Esophagus squamous epithelium (tissue), 5 donors: ENCODE measurements at regions of chr20 and their contacts with region 1.

Region 1: GRCh38 chr20:3710703-3711483 is 1.5 kb downstream of the SIGLEC1 start:
- DNase-seq: no peak
- H3K4me3 ChIP-seq: peak overlapping the region in 1 of 4 donors; percentile 0
- H3K27ac ChIP-seq: peak overlapping the region in 2 of 4 donors; percentile 29 to 66
- H3K4me1 ChIP-seq: peaks cover 0 to 15% (median 5%) of the 10 kb centered on the region in 3 donors
- H3K27me3 ChIP-seq: no peaks in the 10 kb centered on the region
- CTCF ChIP-seq: peak; percentile 77 to 98 (median 90)
- POLR2A ChIP-seq: no peak

Region 2: GRCh38 chr20:3407771-3408637 is 302.9 kb before region 1 on chr20:
- intact Hi-C with region 1: no loop called
- DNase-seq: no peak
- H3K4me3 ChIP-seq: peak overlapping the region; percentile 72 to 98 (median 96)
- H3K27ac ChIP-seq: peak overlapping the region; percentile 91 to 99 (median 98)
- H3K4me1 ChIP-seq: peaks cover 10 to 43% (median 21%) of the 10 kb centered on the region in 3 donors
- H3K27me3 ChIP-seq: no peaks in the 10 kb centered on the region
- CTCF ChIP-seq: no peak
- POLR2A ChIP-seq: peak in 1 of 4 donors; percentile 64

Region 3: GRCh38 chr20:3679749-3680700 is 30.9 kb before region 1 on chr20:
- intact Hi-C with region 1: loop called (anchors 5 kb)
- DNase-seq: no peak
- H3K4me3 ChIP-seq: peak overlapping the region; percentile 27 to 77 (median 52)
- H3K27ac ChIP-seq: peak overlapping the region; percentile 80 to 95 (median 88)
- H3K4me1 ChIP-seq: peaks cover 15 to 55% (median 30%) of the 10 kb centered on the region in 3 donors
- H3K27me3 ChIP-seq: peaks cover 0 to 78% (median 5%) of the 10 kb centered on the region in 4 donors
- CTCF ChIP-seq: no peak
- POLR2A ChIP-seq: peak in 2 of 4 donors; percentile 30 to 42